ENCODE measurements at regions of chr11 and their contacts with region 1.

Region 1: DNA sequence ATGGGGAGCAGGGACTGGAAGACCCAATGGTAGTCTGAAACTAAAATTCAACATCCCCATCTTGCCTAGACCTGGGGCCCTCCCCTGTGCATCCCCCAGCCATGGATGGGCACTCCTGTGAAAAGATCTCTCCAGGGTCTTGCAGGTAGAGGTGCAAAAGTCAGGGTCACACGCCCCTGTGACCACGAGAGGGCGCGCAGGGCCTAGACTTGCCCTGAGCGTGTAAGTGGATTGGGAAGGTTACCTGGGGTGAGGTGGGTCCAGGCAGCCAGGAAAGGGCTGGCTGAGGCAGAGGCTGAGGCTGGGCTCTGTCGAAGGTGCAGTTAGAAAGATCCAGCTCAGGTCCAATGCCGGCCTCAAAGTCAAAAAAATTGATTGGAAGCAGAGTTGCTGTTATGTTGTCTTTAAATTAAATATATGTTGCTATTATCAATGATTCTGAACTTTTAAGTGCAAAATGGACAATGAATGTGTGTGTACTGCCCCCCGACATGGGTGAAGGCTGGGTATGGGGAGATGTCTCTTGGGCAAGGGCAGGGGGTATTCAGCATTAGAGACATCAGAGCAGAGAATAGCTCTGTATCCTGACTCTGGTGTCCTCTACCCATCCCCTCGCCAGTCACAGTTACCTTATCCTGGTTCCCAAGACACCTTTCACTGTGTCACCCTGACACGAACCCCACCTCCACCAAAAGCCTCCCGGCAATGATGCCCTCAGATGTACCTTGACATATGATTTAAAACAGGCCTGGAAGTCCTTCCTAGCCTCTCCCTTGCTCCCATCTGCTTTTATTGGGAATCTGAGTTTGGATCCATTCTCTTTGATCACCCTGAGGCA is 4.7 kb upstream of the POU2F3 start:
- DNase-seq: peak; percentile 80
- ATAC-seq: peak; percentile 65

Region 2: DNA sequence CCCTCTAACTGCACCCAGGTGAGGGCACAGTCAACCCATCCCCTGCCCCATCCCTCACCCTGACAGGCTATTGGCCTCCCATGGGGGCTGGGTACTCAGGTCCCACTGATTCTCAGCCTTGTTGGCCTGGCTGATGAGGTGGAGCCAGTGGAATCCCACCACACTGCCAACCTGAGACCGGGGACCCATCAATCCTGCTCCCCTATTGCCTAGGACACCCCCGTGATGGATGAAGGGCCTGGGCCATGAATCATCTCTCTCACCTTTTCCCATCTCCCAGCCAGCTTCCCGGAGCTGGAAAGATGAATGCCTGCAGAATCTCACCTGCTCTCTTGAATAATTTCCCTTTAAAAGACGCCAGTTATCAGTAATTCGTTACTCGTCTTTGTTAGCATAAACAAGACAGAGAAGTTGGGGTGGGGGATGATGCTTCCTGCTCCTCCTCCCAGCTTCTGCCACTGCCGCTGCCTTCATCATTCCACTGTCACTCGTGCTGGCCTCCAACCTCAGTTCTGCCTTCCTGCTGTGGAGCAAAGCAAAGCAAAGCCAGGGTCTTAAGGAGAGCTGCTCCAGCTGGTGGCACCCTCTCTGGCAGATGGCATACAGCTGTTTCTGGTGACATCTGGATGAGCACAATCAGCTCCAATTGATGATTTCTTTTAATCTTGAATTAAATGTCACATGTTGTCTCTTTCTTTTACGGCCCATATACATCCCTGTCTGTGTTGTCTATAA is 302.2 kb before region 1 on chr11:
- intact Hi-C with region 1: no loop called
- DNase-seq: no peak
- ATAC-seq: no peak

Region 3: GRCh38 chr11:120303004-120303637 is 67.9 kb after region 1 on chr11:
- intact Hi-C with region 1: loop called (anchors 1 kb)
- DNase-seq: no peak
- ATAC-seq: peak; percentile 76